Lower leg skin (tissue), 4 donors: ENCODE measurements at regions of chr4 and their contacts with region 1.

Region 1: DNA sequence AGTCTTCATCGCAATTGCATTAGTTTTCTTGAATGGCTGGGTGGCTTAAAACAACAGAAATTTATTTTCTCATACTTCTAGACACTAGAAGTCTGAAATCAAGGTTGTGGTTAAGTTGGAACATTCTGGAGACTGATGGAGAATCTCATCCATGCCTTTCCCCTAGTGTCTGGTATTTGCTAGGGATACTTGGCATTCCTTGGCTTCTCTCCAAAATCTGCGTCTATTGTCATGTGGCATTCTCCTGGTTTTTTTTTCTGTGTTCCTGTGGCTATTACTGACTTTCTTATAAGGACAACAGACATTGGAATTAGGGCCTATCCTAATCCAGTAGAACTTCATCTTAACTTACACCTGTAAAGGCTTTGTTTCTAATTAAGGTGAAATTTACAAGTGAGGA is 272.8 kb upstream of the EPHA5 start:
- DNase-seq: no peak
- H3K4me3 ChIP-seq: no peak overlapping the region
- CTCF ChIP-seq: no peak
- POLR2A ChIP-seq: no peak

Region 2: GRCh38 chr4:64975177-64975576 is 967.9 kb before region 1 on chr4:
- intact Hi-C with region 1: loop called (anchors 10 kb)
- DNase-seq: no peak
- H3K4me3 ChIP-seq: no peak overlapping the region
- CTCF ChIP-seq: no peak
- POLR2A ChIP-seq: no peak

Region 3: GRCh38 chr4:66223068-66223703 is 280.1 kb after region 1 on chr4:
- intact Hi-C with region 1: no loop called
- DNase-seq: no peak
- H3K4me3 ChIP-seq: no peak overlapping the region
- CTCF ChIP-seq: no peak
- POLR2A ChIP-seq: no peak

Region 4: GRCh38 chr4:66294638-66295037 is 351.6 kb after region 1 on chr4:
- intact Hi-C with region 1: no loop called
- DNase-seq: no peak
- H3K4me3 ChIP-seq: no peak overlapping the region
- CTCF ChIP-seq: no peak
- POLR2A ChIP-seq: no peak